Ascending aorta (tissue), 2 donors: ENCODE measurements at regions of chr17 and their contacts with region 1.

Region 1: GRCh38 chr17:41648411-41649195 is 24.2 kb upstream of the KRT17 start:
- DNase-seq: peak in 1 of 2 donors; percentile 92
- H3K4me3 ChIP-seq: peak overlapping the region; percentile 31 to 56
- H3K27ac ChIP-seq: peak overlapping the region; percentile 35 to 51
- H3K4me1 ChIP-seq: peaks cover 7 to 21% of the 10 kb centered on the region in 2 donors
- H3K27me3 ChIP-seq: no peaks in the 10 kb centered on the region
- CTCF ChIP-seq: peak; percentile 88 to 96 (median 95)

Region 2: GRCh38 chr17:40803617-40804082 is 845.0 kb before region 1 on chr17:
- intact Hi-C with region 1: loop called (anchors 5 kb)
- DNase-seq: peak; percentile 19 to 88
- H3K4me3 ChIP-seq: no peak overlapping the region
- H3K27ac ChIP-seq: no peak overlapping the region
- H3K4me1 ChIP-seq: no peaks in the 10 kb centered on the region
- H3K27me3 ChIP-seq: no peaks in the 10 kb centered on the region
- CTCF ChIP-seq: peak; percentile 74 to 84 (median 76)

Region 3: GRCh38 chr17:40854159-40854814 is 794.3 kb before region 1 on chr17:
- intact Hi-C with region 1: loop called (anchors 5 kb)
- DNase-seq: no peak
- H3K4me3 ChIP-seq: no peak overlapping the region
- H3K27ac ChIP-seq: no peak overlapping the region
- H3K4me1 ChIP-seq: no peaks in the 10 kb centered on the region
- H3K27me3 ChIP-seq: no peaks in the 10 kb centered on the region
- CTCF ChIP-seq: no peak

Region 4: DNA sequence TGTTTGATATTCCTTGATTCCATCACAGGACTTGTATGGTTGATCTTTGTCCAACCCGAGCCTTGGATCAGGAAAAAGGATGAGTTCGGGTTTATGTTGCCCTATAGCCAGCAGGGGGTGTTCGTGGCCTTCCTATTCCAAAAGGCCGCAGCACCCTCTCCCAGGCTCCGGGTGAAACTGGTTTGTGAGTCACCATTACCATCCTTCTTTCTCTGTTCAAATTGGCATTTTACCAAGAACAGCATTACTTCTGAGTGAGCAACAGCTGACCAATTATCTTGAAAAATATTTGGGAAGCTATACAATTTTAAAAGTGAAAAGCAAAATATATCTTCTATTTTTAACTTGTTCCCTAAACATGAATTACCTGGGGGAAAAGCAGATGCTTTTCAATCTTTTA is 739.3 kb before region 1 on chr17:
- intact Hi-C with region 1: loop called (anchors 1 kb)
- DNase-seq: peak; percentile 20 to 92
- H3K4me3 ChIP-seq: no peak overlapping the region
- H3K27ac ChIP-seq: no peak overlapping the region
- H3K4me1 ChIP-seq: peaks cover 11 to 16% of the 10 kb centered on the region in 2 donors
- H3K27me3 ChIP-seq: no peaks in the 10 kb centered on the region
- CTCF ChIP-seq: peak; percentile 70 to 77 (median 73)

Region 5: DNA sequence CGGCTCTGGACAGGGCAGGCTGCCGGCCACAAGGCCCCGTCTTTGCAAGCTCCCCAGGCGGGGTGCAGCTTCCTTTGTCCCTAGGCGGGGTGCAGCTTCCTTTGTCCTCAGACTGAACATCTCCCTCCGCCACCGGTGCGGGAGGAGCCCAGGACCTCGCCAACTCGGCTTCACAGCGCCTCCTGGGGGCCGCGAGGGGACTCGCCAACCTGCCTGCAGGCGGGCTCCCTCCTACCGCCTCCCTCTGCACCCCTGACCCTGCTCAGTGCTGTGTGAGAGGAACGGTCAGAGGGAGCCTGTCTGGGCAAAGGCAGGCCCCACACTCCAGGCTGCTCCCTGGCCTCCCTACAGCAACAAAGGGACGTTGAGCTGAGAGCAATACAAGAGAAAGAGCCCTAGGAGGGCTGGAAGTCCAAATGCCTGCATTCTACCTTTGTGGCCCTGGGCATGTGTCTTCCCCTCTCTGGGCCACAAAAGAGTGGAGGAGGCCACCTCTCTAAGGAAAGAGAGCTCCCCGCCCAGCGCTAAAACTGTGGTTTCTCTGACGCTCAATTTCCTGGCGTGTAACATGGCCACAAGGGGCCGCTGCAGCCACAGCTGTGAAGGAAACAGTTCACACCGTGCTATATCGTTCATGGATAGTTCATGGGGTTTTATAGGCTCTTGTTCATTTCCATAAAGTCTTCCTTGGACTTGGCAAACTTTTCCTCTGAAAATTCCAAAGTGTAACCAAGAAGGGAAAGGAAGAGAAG is 99.6 kb before region 1 on chr17:
- intact Hi-C with region 1: loop called (anchors 1 kb)
- DNase-seq: peak; percentile 27 to 91
- H3K4me3 ChIP-seq: peak overlapping the region; percentile 24 to 50
- H3K27ac ChIP-seq: peak overlapping the region; percentile 65 to 81
- H3K4me1 ChIP-seq: peaks cover 11 to 15% of the 10 kb centered on the region in 2 donors
- H3K27me3 ChIP-seq: no peaks in the 10 kb centered on the region
- CTCF ChIP-seq: peak; percentile 76 to 81 (median 80)

Region 6: DNA sequence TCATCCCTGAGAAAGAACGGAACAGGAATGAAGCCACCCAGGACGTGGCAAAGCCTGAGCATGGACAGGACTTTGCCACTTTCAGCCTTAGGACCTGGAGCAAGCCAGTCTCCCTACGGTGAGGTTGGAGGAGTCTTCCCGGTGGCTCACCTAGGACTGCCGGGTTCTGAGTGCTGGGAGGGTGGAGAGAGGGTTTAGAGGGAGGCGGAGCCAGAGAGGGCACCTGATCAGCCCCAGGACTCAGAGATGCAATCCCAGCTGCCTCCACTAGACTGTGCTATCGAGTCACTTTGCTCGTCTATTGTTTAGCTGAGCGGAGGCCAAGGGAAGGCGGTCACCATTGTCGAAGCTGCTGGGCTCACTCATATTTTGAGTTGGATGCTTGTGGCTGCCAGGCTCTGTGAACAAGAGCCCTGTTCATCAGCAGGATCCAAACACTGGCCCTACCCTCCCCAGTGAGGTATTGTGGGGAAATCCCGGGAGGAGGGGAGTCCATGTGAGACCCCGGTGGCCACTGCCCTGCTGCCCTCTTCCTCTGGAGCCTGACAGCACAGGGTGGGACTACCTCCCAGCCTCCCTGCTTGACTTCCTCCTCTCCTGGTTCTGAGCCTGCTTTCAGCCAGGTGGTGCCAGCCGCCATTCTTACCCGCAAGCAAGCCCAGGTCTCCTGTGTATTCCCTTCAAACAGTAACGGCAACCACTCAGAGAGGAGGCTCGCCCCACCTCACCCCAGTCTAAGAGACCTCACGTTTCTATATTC is 68.9 kb before region 1 on chr17:
- intact Hi-C with region 1: loop called (anchors 1 kb)
- DNase-seq: peak; percentile 30 to 90
- H3K4me3 ChIP-seq: peak overlapping the region in 1 of 2 donors; percentile 25
- H3K27ac ChIP-seq: no peak overlapping the region
- H3K4me1 ChIP-seq: peaks cover 0 to 5% of the 10 kb centered on the region in 2 donors
- H3K27me3 ChIP-seq: no peaks in the 10 kb centered on the region
- CTCF ChIP-seq: peak; percentile 78 to 82 (median 81)